Mammary epithelial cell (primary cell): ENCODE measurements at regions of chr12 and their contacts with region 1.

Region 1: GRCh38 chr12:74365178-74365964 is 172.3 kb upstream of the ATXN7L3B start:
- DNase-seq: peak; percentile 34
- H3K4me3 ChIP-seq: no peak overlapping the region
- H3K27ac ChIP-seq: no peak overlapping the region
- H3K4me1 ChIP-seq: no peaks in the 10 kb centered on the region
- H3K27me3 ChIP-seq: peaks cover 5% of the 10 kb centered on the region
- CTCF ChIP-seq: peak; percentile 74 to 80

Region 2: GRCh38 chr12:74264692-74265091 is 100.7 kb before region 1 on chr12:
- CTCF ChIA-PET with region 1: no interaction called
- dilution Hi-C with region 1: no loop called
- in situ Hi-C with region 1: no loop called
- intact Hi-C with region 1: loop called (anchors 10 kb)
- DNase-seq: no peak
- H3K4me3 ChIP-seq: no peak overlapping the region
- H3K27ac ChIP-seq: no peak overlapping the region
- H3K4me1 ChIP-seq: no peaks in the 10 kb centered on the region
- H3K27me3 ChIP-seq: no peaks in the 10 kb centered on the region
- CTCF ChIP-seq: no peak

Region 3: DNA sequence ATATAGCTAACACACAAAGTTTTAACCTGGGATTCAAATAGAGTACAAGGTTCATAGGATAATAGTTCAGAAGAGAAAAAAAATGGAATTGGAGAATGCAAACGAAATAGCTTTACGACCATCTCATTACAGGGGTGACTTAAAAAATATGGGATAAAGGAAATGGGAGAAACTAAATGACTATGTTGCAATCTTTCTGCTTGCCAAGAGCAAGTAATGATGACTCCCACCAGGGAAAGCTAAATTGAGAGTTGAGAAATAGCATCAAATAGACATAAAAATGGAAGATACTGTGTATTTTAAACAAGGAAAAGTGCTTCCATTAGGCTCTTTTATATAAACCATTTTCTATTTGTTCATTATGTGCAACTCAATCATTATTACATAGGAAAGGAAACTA is 16.6 kb after region 1 on chr12:
- CTCF ChIA-PET with region 1: no interaction called
- dilution Hi-C with region 1: no loop called
- in situ Hi-C with region 1: no loop called
- intact Hi-C with region 1: no loop called
- DNase-seq: no peak
- H3K4me3 ChIP-seq: no peak overlapping the region
- H3K27ac ChIP-seq: no peak overlapping the region
- H3K4me1 ChIP-seq: no peaks in the 10 kb centered on the region
- H3K27me3 ChIP-seq: peaks cover 2% of the 10 kb centered on the region
- CTCF ChIP-seq: no peak

Region 4: DNA sequence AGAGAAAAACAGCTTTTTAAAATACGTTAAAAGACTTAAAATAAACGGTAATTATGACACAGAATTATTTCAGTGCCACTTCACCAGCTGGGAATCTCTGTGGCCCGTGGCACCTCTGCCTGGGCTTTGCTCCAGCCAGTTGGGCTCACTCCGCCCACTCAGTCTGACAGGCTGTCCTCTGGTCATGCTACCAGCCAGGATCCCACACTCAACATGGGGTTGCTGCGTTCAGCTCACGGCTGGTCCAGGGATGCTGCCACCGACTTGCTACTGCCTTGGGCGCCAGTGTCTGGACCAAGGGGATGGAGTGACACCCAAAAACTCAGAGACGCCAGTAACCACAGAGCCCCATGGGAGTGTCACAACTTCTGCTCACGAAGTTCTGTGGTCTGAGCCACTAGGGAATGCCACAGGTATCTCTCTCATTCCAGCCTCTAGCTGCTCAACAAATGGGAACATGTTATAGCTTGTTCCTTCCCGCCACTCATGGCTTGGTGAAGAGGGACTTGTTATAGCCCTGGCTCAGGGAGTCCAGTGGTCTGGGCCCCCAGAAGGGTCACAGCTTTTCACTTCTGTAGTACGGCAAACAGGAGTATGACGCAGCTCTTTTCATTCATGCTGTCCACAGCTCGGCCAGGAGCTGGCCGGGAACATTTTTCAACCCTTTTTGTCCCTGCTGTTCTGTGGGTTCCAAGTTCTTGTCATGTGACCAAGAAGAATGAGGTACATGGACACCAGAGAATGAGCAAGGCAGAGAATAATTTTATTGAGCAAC is 148.9 kb after region 1 on chr12:
- CTCF ChIA-PET with region 1: no interaction called
- dilution Hi-C with region 1: no loop called
- in situ Hi-C with region 1: no loop called
- intact Hi-C with region 1: no loop called
- DNase-seq: peak; percentile 11
- H3K4me3 ChIP-seq: no peak overlapping the region
- H3K27ac ChIP-seq: no peak overlapping the region
- H3K4me1 ChIP-seq: no peaks in the 10 kb centered on the region
- H3K27me3 ChIP-seq: no peaks in the 10 kb centered on the region
- CTCF ChIP-seq: no peak

Region 5: DNA sequence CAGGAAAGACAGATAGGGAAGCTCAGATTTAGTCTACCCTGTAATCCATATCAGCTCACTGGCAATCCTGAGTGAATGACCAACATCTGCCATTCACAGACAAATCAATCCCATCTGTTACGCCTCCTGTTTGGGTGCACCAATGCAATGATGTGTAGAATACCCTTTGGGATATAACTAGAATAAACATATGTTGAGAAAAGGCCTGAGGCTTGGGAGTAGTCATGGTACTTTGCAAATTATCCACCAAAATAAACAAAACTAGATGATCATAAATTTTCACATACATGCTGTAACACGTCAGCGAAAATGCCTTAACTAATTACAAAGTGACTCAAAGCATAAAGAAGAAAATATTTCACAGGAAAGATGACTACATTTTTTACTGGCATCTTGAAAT is 765.5 kb after region 1 on chr12:
- CTCF ChIA-PET with region 1: no interaction called
- dilution Hi-C with region 1: no loop called
- in situ Hi-C with region 1: no loop called
- intact Hi-C with region 1: no loop called
- DNase-seq: peak; percentile 83
- H3K4me3 ChIP-seq: no peak overlapping the region
- H3K27ac ChIP-seq: no peak overlapping the region
- H3K4me1 ChIP-seq: peaks cover 6% of the 10 kb centered on the region
- H3K27me3 ChIP-seq: no peaks in the 10 kb centered on the region
- CTCF ChIP-seq: no peak